MCF 10A (cell line): ENCODE measurements at regions of chr12 and their contacts with region 1.

Region 1: DNA sequence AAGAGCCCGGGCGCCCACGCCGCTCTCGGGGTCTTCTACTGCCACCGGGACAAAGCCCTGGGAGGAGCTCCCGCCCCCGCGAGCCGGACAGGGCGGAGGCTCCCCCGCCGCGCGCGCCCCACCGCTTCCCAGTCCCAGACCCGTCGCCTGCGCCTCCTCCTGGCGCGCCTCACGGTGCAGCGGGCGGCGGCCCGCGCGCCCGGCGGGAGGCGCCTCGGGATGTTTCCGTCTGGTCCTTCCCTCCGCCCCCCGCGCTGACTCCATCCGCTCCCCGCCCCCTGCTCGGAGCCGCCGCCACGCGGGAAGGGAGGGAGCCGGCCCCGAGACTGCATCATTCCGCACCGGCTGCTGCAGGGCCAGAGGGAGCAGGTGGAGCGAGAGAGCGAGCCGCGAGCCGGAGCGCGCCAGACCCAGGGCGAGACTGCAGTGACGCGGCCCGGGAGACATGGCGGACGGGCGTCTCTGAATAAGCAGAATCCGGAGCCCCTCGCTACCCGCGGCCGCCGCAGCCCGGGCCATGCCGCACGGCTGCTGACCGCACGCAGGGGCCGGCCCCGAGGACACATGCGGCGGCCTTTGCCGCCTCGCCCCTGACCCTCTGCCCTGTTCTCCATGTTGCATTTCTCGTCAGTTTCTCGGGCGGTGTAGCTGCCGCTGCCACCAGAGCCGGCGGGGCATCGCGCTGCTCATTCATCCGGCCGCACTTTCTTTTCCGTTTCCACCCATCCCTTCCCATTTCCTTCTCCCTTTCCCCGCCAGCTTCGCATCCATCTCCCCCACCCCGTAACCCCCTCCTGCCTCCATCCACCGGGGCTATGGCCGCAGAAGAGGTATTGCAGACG is at the start of gene BICD1:
- DNase-seq: peak; percentile 89
- H3K4me3 Mint-ChIP-seq: peak within 1 kb of the TSS; percentile 81
- H3K27ac Mint-ChIP-seq: peak within 1 kb of the TSS; percentile 76
- H3K4me1 Mint-ChIP-seq: peaks cover 18% of the 10 kb centered on the region
- H3K27me3 Mint-ChIP-seq: no peaks in the 10 kb centered on the region
- CTCF ChIP-seq: peak; percentile 25
- total RNA-seq, gene BICD1: 39.9 and 49.3 TPM in 2 replicates

Region 2: DNA sequence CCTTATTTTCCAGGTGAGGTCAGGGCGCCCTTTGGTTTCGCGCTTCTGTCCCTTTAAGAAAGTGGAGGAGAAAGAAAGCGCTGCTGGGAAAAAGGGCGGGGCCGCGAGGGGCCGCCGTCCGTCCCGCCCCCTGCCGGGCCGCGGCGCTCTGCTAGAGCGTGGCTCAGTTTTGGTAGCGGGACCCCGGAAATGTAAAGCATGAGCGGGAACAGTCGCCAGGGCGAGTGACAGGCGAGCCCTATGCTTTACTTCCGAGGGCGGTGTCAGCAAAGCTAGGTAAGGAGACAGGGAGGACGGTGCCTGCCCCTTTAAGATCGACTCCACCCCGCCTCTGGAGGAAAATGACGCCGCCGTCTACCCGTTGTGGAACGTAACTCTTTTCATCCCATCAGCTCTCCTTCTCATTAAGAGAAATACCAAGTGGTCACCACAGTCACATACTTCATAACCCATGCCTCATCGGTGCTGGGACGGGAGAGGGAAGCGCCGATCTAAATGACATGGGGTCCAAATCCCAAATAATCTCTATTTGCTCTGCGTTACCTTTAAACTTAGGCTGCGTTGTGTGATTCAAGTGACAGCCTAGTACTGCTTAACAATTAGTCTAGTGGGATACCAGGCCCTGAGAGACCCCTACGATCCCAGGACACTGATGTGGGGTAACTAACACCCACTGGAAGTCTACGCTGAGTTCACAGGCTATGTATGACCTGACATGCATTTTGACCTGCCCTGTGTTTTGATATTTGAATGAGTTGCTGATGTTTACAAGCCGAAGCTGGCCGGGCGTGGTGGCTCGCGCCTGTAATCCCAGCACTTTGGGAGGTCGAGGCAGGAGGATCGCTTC is 447.4 kb before region 1 on chr12 and contains the start of gene ETFBKMT:
- CTCF ChIA-PET with region 1: interaction called, 4 read pairs
- POLR2A ChIA-PET with region 1: interaction called, 4 read pairs
- intact Hi-C with region 1: loop called (anchors 5 kb)
- DNase-seq: peak; percentile 96
- H3K4me3 Mint-ChIP-seq: peak within 1 kb of the TSS; percentile 93
- H3K27ac Mint-ChIP-seq: peak within 1 kb of the TSS; percentile 94
- H3K4me1 Mint-ChIP-seq: peaks cover 3% of the 10 kb centered on the region
- H3K27me3 Mint-ChIP-seq: no peaks in the 10 kb centered on the region
- CTCF ChIP-seq: no peak
- total RNA-seq, gene ETFBKMT: 3.0 and 3.3 TPM in 2 replicates

Region 3: DNA sequence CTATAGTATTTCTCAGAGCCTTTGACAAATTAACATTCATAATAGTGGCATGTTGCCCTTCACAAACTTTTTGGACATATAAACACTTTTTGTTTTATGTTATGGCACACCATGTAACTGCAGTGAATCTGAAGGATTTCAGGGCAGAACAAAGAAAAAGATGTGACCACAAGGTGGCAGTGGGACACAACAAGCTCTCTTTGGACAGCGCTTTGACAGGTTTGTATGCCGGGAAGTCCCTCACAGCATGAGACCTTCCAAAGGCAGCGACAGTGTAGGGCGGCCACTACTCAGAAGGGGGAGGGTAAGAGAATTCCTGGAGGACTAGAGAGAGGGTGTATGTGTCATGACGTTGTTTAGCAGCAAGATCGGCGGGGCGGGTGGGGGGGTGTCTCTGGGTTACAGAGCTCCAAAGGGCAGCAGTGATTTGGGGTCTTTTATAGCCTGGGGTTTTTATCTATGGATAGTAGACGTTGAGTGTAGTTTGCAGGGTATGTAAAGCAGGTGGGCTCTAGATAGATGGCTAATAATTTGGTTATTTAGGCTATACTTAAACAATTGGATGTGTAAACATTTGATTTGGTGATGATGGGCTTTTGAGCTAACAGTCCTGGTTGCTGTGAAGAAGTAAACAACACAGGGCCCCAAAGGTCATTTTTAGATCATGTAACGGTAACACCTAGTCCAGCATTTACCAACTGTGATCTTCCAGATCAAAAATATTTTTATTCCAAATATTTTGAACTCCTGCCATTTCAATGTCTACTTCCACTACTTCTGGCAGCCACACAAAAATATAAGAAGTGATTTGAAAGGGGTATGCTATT is 424.4 kb before region 1 on chr12:
- CTCF ChIA-PET with region 1: interaction called, 3 read pairs
- POLR2A ChIA-PET with region 1: no interaction called
- intact Hi-C with region 1: loop called (anchors 1 kb)
- DNase-seq: peak; percentile 88
- H3K4me3 Mint-ChIP-seq: no peak overlapping the region
- H3K27ac Mint-ChIP-seq: no peak overlapping the region
- H3K4me1 Mint-ChIP-seq: no peaks in the 10 kb centered on the region
- H3K27me3 Mint-ChIP-seq: no peaks in the 10 kb centered on the region
- CTCF ChIP-seq: peak; percentile 82

Region 4: GRCh38 chr12:32062881-32063280 is 43.9 kb before region 1 on chr12:
- CTCF ChIA-PET with region 1: interaction called, 8 read pairs
- POLR2A ChIA-PET with region 1: interaction called, 4 read pairs
- intact Hi-C with region 1: loop called (anchors 2 kb)
- DNase-seq: no peak
- H3K4me3 Mint-ChIP-seq: no peak overlapping the region
- H3K27ac Mint-ChIP-seq: no peak overlapping the region
- H3K4me1 Mint-ChIP-seq: no peaks in the 10 kb centered on the region
- H3K27me3 Mint-ChIP-seq: no peaks in the 10 kb centered on the region
- CTCF ChIP-seq: no peak

Region 5: DNA sequence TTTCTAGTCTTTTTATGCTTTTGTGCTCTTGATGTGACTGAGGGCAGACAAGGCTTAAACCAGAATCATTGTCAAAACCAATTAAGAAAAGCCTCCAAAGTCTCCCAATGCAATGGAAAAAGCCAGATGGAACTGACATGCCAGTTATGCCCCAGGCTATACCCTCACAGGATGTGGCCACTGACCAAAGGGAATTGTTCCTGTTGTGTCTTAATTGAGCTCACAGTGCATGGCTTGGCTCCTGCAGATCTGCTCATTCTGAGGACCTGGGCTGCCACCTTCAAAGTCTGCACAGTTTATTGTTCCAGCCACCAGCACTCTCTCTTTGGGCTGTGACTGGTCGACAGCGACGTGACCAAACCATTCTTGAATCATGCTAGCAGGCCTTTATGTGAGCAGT is 17.2 kb before region 1 on chr12:
- CTCF ChIA-PET with region 1: interaction called, 13 read pairs
- POLR2A ChIA-PET with region 1: interaction called, 3 read pairs
- intact Hi-C with region 1: no loop called
- DNase-seq: peak; percentile 35
- H3K4me3 Mint-ChIP-seq: no peak overlapping the region
- H3K27ac Mint-ChIP-seq: no peak overlapping the region
- H3K4me1 Mint-ChIP-seq: no peaks in the 10 kb centered on the region
- H3K27me3 Mint-ChIP-seq: no peaks in the 10 kb centered on the region
- CTCF ChIP-seq: no peak

Region 6: DNA sequence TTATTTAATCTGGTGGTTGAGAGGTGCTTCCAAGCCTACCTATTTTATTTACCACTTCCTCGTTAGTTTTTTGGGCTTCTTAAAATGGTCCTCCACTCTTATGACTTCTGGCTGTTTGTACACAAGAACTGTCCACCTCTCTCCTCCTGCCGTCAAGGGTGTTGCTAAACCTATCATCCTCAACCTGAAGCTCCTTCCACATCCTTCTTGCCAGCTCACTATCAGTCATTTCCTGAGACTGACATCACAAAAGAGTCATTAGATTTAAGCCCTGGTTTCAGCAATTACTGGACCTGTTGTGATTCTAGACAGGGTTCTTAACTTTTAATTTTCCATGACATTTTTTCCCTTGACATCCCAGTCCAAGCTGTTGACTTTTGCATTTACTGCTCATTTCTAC is 91.8 kb after region 1 on chr12:
- CTCF ChIA-PET with region 1: no interaction called
- POLR2A ChIA-PET with region 1: no interaction called
- intact Hi-C with region 1: loop called (anchors 5 kb)
- DNase-seq: peak; percentile 66
- H3K4me3 Mint-ChIP-seq: no peak overlapping the region
- H3K27ac Mint-ChIP-seq: peak overlapping the region; percentile 47
- H3K4me1 Mint-ChIP-seq: peaks cover 8% of the 10 kb centered on the region
- H3K27me3 Mint-ChIP-seq: no peaks in the 10 kb centered on the region
- CTCF ChIP-seq: no peak

Region 7: DNA sequence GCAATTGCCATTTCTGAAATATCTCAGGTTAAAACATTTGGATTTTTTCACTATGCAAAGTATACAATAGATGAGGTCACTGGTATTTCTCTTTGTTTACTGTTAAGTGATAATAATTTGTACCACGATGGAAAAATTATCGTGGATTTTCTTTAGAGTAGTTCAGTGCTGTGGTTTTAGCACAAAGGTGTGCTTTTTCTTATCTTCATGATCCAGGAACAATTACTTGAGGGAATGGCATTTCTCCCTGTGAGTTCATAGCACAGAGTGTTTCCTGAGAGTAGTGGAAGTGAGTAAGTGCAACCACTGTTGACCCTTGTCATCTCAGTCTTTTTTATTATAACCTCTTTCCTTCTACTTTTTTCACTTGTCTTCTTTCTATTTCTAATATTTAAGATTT is 379.4 kb after region 1 on chr12:
- CTCF ChIA-PET with region 1: no interaction called
- POLR2A ChIA-PET with region 1: no interaction called
- intact Hi-C with region 1: no loop called
- DNase-seq: peak; percentile 23
- H3K4me3 Mint-ChIP-seq: peak overlapping the region; percentile 41
- H3K27ac Mint-ChIP-seq: peak overlapping the region; percentile 47
- H3K4me1 Mint-ChIP-seq: peaks cover 15% of the 10 kb centered on the region
- H3K27me3 Mint-ChIP-seq: no peaks in the 10 kb centered on the region
- CTCF ChIP-seq: no peak